GM10248 (cell line): ENCODE measurements at regions of chr6 and their contacts with region 1.

Region 1: DNA sequence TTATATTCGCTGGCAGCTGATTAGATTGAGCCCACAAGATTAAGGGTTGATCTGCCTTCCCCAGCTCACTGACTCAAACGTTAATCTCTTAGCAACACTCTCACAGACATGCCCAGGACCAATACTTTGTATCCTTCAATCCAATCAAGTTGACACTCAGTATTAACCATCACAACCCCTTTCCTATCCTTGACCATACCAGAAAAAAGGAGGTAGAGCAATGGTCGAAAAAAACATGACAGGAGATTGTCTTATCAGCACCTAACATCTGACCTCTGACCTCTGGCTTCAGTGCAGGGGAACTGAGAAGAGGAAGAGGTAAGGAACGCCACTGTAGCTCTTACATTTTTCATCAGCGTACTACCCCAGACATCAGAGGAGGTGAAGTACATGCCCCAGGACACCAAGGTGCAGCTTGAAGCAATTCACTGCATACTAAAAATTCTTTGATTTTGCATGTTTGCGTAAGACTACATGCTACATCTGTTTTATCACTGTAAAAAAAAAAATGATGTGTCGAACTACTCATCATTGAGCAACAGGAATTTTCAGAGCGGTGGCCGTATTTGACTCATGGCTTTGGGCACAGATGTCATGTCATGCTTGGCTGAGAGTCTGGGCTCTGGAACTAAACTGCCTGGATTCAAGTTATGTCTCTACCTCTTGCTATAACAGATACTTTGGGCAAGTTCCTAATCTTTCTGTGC is 188.0 kb upstream of the TAB2 start:
- DNase-seq: no peak
- CTCF ChIP-seq: no peak

Region 2: DNA sequence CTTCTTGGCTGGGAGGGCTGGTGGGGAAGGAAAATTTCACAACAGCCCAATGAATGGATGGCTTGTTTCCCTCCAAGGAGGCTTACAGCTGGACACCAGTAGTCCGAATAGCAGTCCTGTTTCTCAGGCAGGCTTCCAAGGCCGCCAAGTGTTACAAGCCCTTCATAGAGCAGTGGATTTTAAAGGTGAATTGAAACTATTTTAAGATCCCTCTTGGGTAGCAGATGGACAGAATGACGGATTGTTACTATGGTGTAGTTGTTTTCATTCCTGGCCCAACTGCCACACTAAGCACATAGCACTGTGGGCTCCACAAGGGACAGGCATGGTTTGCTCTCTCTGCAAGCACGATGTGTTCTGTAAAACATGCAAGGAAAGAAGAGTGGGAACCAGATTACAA is 15.4 kb before region 1 on chr6:
- CTCF ChIA-PET with region 1: interaction called, 17 read pairs
- POLR2A ChIA-PET with region 1: no interaction called
- DNase-seq: no peak
- CTCF ChIP-seq: no peak

Region 3: DNA sequence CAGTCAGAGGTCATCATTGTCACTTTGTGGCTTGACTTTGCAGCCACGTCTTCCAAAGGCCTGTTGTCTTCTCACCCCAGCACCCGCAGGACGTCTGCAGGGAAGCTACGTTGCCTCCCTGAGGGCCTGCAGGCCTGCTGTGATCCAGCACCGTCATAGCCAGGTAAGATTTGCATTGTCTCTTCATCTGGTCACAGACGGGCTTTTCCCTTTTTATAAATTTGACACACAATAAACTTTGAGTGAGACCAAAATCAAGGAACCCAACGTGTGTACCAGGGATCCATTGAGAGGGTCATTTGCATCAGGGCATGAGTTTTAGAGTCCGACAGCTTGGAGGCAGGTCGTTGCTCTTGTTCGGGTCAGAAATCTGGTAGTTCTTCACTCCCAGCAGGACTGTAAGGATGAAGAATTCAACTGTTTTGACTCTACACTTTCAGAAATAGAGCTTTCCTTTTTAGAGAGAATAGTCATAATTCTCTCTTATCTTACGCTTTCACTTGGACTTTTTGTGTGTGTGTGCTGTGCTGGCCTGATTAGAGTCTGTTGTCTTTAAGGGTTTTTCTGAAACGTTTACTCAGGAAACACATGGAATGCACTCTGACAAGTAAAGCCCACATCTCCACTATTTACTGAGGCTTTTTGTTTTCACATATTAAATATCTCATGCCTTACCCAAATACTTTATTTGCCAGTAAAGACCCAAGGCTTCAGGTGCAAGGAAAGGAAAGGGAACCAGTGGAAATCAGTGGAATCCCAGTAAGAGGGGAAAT is 10.8 kb after region 1 on chr6:
- CTCF ChIA-PET with region 1: interaction called, 12 read pairs
- POLR2A ChIA-PET with region 1: no interaction called
- DNase-seq: peak; percentile 42
- CTCF ChIP-seq: no peak